Aorta (tissue), 5 donors: ENCODE measurements at regions of chr10 and their contacts with region 1.

Region 1: DNA sequence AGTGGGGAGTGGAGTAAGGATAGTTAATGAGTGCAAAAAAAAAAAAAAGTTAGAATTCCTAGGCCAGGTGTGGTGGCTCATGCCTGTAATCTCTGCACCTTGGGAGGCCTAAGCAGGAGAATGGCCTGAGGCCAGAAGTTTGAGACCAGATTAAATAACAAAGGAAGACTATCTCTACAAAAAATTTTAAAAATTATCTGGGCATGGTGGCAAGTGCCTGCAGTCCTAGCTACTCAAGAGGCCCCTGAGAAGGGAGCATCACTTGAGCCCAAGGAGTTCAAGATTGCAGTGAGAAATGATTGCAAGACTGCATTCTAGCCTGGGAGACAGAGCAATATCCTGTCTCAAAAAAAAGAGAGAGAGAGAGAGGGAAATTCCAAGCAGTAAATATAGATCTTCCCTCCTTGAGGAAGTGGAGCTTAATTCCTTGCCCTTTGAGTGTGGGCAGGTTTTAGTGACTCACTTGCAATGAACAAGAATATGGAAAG is 19.5 kb upstream of the CSTF2T start:
- DNase-seq: no peak
- ATAC-seq: no peak
- H3K4me3 ChIP-seq: no peak overlapping the region
- H3K27ac ChIP-seq: peak overlapping the region; percentile 17 to 87
- H3K4me1 ChIP-seq: peaks cover 3 to 15% of the 10 kb centered on the region in 2 donors
- H3K27me3 ChIP-seq: no peaks in the 10 kb centered on the region

Region 2: GRCh38 chr10:51699475-51700227 is 19.2 kb before region 1 on chr10 and contains the start of gene CSTF2T:
- intact Hi-C with region 1: no loop called
- DNase-seq: peak; percentile 93
- ATAC-seq: peak; percentile 97
- H3K4me3 ChIP-seq: peak within 1 kb of the TSS; percentile 60 to 98
- H3K27ac ChIP-seq: peak within 1 kb of the TSS; percentile 80 to 99
- H3K4me1 ChIP-seq: peaks cover 0 to 4% of the 10 kb centered on the region in 2 donors
- H3K27me3 ChIP-seq: no peaks in the 10 kb centered on the region
- total RNA-seq, gene CSTF2T: 18.2 to 25.2 TPM

Region 3: GRCh38 chr10:51860257-51860656 is 141.4 kb after region 1 on chr10:
- intact Hi-C with region 1: loop called in 1 of 2 experiments (anchors 10 kb)
- DNase-seq: peak in 1 of 2 donors; percentile 63
- ATAC-seq: peak; percentile 87
- H3K4me3 ChIP-seq: no peak overlapping the region
- H3K27ac ChIP-seq: peak overlapping the region in 1 of 2 donors; percentile 45
- H3K4me1 ChIP-seq: peaks cover 0 to 1% of the 10 kb centered on the region in 2 donors
- H3K27me3 ChIP-seq: no peaks in the 10 kb centered on the region

Region 4: GRCh38 chr10:51960494-51960895 is 241.6 kb after region 1 on chr10:
- intact Hi-C with region 1: loop called in 1 of 2 experiments (anchors 5 kb)
- DNase-seq: no peak
- ATAC-seq: peak; percentile 77
- H3K4me3 ChIP-seq: no peak overlapping the region
- H3K27ac ChIP-seq: peak overlapping the region in 1 of 2 donors; percentile 44
- H3K4me1 ChIP-seq: peaks cover 0 to 1% of the 10 kb centered on the region in 2 donors
- H3K27me3 ChIP-seq: no peaks in the 10 kb centered on the region